MCF 10A (cell line): ENCODE measurements at regions of chr1 and their contacts with region 1.

Region 1: GRCh38 chr1:152761356-152762213 is 3.8 kb downstream of the KPRP start:
- DNase-seq: no peak
- H3K4me3 Mint-ChIP-seq: peak overlapping the region; percentile 0
- H3K27ac Mint-ChIP-seq: peak overlapping the region; percentile 4
- H3K4me1 Mint-ChIP-seq: peaks cover 41% of the 10 kb centered on the region
- H3K27me3 Mint-ChIP-seq: no peaks in the 10 kb centered on the region
- CTCF ChIP-seq: peak; percentile 10

Region 2: DNA sequence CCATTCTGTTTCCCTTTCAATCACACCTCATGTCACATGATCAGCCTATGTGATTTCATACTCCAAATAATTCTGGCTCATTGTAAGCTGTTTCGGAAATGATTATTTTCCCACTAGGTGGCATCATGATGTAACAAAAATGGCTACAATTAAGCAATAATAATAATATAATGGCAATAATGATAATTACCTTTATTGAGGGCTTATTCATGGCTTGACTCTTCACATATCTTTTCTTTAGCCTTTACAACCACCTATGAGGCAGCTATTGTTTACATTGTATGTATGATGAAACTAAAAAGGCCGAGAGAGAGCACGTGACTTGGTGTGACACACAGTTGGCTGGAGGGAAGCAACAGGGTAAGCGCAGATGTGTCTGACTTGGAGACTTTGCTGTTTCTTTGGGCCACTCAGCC is 16.3 kb before region 1 on chr1:
- CTCF ChIA-PET with region 1: interaction called, 4 read pairs
- POLR2A ChIA-PET with region 1: interaction called, 16 read pairs
- intact Hi-C with region 1: no loop called
- DNase-seq: peak; percentile 89
- H3K4me3 Mint-ChIP-seq: no peak overlapping the region
- H3K27ac Mint-ChIP-seq: peak overlapping the region; percentile 71
- H3K4me1 Mint-ChIP-seq: peaks cover 34% of the 10 kb centered on the region
- H3K27me3 Mint-ChIP-seq: no peaks in the 10 kb centered on the region
- CTCF ChIP-seq: no peak

Region 3: DNA sequence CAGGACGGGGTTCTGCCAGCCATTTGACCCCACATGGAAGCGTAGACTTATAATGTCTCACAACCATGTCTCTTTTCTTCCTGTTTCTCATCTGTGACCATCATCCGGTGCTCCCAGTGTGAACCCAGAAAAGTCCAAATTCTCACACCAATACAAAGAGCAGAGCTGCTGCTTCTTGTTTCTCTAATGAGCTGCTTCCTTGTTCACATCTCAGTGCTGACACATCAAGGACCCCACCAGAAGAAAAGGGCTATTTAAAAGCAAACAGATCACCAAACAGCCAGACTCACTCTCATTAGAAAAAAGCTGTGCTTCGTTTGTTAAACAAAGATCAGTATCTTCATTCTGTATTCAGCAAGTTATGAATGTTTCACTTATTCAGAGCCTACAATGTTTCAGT is 34.1 kb after region 1 on chr1:
- CTCF ChIA-PET with region 1: no interaction called
- POLR2A ChIA-PET with region 1: no interaction called
- intact Hi-C with region 1: no loop called
- DNase-seq: no peak
- H3K4me3 Mint-ChIP-seq: no peak overlapping the region
- H3K27ac Mint-ChIP-seq: no peak overlapping the region
- H3K4me1 Mint-ChIP-seq: no peaks in the 10 kb centered on the region
- H3K27me3 Mint-ChIP-seq: no peaks in the 10 kb centered on the region
- CTCF ChIP-seq: no peak